Activated naive CD4-positive, alpha-beta T cell treated with anti-CD3 and anti-CD28 coated beads for 36 hours (primary cell): ENCODE measurements at regions of chr10 and their contacts with region 1.

Region 1: DNA sequence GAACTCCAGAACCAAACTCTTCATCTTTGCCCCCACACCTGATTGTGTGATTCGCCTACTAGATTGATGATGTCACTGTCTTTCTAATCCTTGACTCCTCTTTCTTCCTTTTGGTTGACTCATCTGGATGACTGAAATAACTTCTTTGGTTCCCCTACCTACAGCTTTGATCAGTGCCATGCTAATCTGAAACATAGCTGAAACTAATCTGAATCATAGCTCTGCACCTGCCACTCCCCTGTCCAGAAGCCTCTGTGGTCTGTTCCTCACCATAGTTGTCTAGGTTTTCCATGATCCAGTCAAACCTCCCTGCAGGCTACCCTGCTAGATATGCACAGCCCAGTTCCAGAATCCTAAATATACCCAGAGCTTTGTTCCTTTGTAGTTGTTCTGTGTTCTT is 51.9 kb downstream of the ZNF365 start:
- DNase-seq: peak; percentile 64
- H3K4me3 Mint-ChIP-seq: no peak overlapping the region
- H3K27ac Mint-ChIP-seq: peak overlapping the region; percentile 12
- H3K4me1 Mint-ChIP-seq: peaks cover 28% of the 10 kb centered on the region
- H3K27me3 Mint-ChIP-seq: no peaks in the 10 kb centered on the region

Region 2: DNA sequence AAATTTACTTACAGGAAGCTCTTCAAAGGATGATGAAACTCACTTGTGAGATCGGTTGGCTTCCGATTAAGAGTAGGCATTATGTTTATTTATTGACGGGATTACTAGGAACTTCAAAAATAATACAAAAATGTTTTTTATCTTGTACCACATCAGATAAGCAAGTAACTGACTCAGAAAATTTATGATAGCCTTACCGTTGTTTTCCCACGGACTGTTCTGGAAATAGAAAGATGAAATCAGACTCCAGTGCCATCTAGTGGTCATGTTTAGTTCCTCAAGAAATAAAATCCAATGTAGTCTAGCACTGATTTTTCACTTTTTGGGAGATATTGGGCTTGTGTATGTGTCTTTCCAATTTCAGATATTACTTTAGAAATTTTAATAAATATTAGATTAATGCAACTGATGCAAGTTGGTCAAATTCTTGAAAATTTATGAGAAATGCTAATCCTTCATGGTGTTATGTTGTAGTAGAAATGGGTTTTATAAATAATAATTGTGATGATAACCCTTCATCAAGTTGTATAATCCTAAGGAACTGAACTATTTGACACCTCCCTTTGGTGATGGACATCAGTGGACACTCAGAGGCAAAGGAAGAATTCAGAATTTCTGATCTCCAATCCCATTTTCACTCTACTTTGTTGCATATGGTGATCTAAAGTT is 1141.7 kb before region 1 on chr10:
- CTCF ChIA-PET with region 1: no interaction called
- intact Hi-C with region 1: loop called (anchors 5 kb)
- DNase-seq: no peak
- H3K4me3 Mint-ChIP-seq: peak overlapping the region; percentile 41
- H3K27ac Mint-ChIP-seq: no peak overlapping the region
- H3K4me1 Mint-ChIP-seq: peaks cover 17% of the 10 kb centered on the region
- H3K27me3 Mint-ChIP-seq: peaks cover 2% of the 10 kb centered on the region

Region 3: DNA sequence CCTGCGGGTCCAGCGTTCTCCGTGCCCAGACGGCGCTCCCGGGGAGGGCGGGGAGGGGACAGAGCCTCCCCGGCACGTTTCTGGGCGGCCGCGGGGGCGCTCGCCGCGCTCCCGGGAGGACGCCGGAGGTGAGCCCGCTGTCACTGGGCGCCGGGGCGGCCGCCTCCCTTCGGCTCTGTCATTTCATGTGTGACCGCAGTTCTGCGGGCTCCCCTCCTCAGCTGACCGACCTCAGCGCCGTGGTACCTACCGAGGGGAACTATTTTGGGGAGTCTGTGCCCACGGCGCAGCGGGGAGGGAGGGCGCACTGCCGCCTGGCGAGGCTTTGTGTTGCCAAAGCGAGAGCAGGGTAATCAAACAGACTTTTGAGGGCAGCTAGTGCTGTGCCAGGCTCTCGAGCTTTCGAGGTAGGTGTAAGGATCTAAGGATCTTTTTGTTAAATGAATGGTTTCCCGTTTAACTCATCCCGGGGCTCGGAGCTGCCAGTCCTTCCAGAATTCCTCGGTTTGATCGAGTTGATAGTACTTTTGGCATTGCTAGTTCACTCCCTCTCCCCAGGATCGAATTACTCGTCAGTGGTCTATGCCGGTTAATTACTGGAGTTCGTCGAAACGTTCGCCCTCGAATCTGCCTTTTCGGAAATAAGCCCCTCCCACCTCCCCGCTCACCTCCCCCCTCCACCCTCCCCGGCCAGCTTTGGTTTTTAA is 522.7 kb before region 1 on chr10:
- CTCF ChIA-PET with region 1: no interaction called
- intact Hi-C with region 1: loop called (anchors 1 kb)
- DNase-seq: peak; percentile 74
- H3K4me3 Mint-ChIP-seq: peak overlapping the region; percentile 99
- H3K27ac Mint-ChIP-seq: peak overlapping the region; percentile 100
- H3K4me1 Mint-ChIP-seq: peaks cover 42% of the 10 kb centered on the region
- H3K27me3 Mint-ChIP-seq: no peaks in the 10 kb centered on the region

Region 4: DNA sequence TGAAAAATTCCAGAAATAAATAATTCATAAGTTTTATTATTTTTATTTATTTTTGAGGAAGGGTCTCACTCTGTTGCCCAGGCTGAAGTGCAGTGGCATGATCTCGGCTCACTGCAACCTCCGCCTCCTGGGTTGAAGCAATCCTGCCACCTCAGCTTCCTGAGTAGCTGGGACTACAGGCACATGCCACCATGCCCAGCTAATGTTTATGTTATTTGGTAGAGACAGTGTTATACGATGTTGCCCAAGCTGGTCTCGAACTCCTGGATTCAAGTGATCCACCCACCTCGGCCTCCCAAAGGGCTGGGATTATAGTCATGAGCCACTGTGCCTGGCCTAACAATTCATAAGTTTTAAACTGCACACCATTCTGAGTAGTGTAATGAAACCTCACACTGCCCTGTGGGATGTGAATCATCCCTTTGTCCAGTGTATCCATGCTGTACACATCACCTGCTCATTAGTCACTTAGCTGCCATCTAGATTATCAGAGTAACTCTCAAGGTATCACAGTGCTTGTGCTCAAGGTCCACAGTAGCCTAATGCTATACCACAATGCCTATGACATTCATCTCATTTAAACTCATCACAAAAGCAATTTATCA is 175.4 kb before region 1 on chr10:
- CTCF ChIA-PET with region 1: no interaction called
- intact Hi-C with region 1: loop called (anchors 1 kb)
- DNase-seq: peak; percentile 8
- H3K4me3 Mint-ChIP-seq: no peak overlapping the region
- H3K27ac Mint-ChIP-seq: no peak overlapping the region
- H3K4me1 Mint-ChIP-seq: peaks cover 45% of the 10 kb centered on the region
- H3K27me3 Mint-ChIP-seq: no peaks in the 10 kb centered on the region

Region 5: DNA sequence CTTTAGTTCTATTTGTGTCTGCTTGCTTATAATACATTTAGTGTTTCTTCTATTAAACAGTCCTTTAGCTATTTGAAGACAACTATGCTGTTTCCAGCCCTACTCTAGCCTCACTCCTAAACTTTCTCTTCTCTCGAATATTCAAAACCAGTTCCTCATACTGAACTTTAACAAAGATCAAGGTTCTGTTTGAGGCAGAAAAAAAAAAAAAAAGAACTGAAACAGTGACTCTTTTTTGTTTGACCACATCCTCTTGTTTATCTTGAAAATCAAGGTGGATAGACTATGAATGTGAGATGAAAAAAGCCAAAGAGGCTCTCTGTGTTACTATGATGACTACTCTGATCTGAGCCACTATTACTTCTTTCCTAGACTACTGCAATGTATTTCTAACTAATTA is 102.4 kb after region 1 on chr10:
- CTCF ChIA-PET with region 1: no interaction called
- intact Hi-C with region 1: loop called (anchors 1 kb)
- DNase-seq: no peak
- H3K4me3 Mint-ChIP-seq: peak overlapping the region; percentile 19
- H3K27ac Mint-ChIP-seq: peak overlapping the region; percentile 26
- H3K4me1 Mint-ChIP-seq: peaks cover 37% of the 10 kb centered on the region
- H3K27me3 Mint-ChIP-seq: no peaks in the 10 kb centered on the region

Region 6: DNA sequence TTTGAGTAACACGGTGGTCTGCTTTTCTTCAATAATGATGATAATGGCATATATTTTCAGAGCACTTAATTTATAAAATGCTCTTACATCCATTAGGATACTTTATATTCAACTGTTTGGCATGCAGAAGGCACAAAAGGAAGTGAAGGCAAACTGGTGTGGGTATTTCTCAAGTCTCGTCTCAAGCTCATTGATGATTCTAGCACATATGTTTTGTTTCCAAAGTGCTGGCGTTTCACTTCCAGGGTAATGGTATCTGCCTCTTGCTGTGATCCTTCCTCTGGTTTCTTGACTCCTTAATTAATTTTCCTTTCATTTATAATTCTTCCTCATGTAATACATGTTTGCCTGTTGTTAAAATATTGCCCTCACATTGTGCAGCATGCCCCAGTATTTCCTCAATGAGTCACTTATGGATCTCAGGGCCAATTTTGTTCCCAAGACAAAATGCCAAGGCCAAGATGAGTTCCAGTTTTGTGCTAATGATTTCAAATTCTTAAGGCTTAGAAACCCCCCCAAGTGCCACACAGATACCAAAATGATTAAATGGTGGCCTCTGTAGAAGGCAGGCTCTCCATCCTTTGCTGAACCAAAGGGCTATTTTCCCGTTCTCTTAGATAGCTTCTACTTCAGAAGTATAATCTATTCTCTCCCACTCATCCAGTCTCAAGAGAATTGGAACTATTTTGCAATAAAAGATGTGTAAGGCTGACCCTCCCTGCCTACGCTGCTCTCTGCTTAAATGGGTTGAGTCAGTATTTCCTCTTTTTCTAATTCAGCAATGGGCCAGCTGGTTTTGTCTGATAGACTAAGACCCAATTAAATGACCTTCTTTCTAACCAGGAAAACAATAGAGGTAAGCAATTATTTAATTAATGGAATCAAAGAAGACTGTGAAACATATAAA is 119.3 kb after region 1 on chr10:
- CTCF ChIA-PET with region 1: no interaction called
- intact Hi-C with region 1: no loop called
- DNase-seq: no peak
- H3K4me3 Mint-ChIP-seq: no peak overlapping the region
- H3K27ac Mint-ChIP-seq: no peak overlapping the region
- H3K4me1 Mint-ChIP-seq: no peaks in the 10 kb centered on the region
- H3K27me3 Mint-ChIP-seq: no peaks in the 10 kb centered on the region

Region 7: DNA sequence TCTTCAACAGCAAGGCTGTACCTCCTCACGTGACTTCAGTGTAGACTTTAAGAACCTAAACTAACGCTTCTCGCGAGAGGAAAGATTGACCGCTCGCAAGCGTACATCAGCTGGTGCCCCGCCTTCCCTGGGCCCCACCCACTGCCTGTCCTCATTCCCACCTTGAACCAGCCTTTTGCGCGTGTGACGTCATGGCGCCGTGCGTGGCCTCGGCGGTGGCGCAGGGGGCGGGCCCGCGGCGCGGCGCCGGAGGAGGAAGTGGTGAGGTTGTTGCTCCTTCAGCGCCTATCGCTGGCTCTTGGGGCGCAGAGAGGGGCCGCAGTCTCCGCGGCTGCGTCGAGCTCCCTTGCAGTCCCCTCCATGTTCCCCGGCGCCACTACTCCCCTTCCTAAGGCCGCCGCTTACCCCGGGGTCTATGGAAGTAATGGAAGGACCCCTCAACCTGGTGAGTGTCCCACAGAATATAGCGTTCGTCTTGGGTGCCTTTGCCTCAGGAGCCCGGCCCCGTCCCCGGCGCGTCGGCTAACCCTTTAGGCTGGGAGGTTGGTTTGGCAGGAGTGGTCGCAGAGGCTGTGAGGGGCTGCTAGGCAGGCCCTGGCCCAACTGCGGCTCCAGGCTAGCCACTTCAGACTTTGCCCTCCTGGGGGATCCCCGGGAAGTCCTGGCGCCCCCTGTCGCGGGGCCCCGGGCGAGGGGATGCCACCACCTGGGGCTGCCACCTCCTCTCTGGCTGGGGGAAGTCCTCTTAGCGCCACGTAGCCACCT is 707.2 kb after region 1 on chr10 and contains the start of gene NRBF2:
- CTCF ChIA-PET with region 1: no interaction called
- intact Hi-C with region 1: loop called (anchors 2 kb)
- DNase-seq: peak; percentile 98
- H3K4me3 Mint-ChIP-seq: peak within 1 kb of the TSS; percentile 89
- H3K27ac Mint-ChIP-seq: peak within 1 kb of the TSS; percentile 92
- H3K4me1 Mint-ChIP-seq: peaks cover 38% of the 10 kb centered on the region
- H3K27me3 Mint-ChIP-seq: no peaks in the 10 kb centered on the region
- total RNA-seq, gene NRBF2: 15.4 to 15.6 TPM

Region 8: GRCh38 chr10:63268798-63269503 is 842.9 kb after region 1 on chr10:
- CTCF ChIA-PET with region 1: no interaction called
- intact Hi-C with region 1: no loop called
- DNase-seq: peak; percentile 91
- H3K4me3 Mint-ChIP-seq: peak overlapping the region; percentile 88
- H3K27ac Mint-ChIP-seq: peak overlapping the region; percentile 98
- H3K4me1 Mint-ChIP-seq: peaks cover 22% of the 10 kb centered on the region
- H3K27me3 Mint-ChIP-seq: no peaks in the 10 kb centered on the region